ENCODE measurements at regions of chr12 and their contacts with region 1.

Region 1: GRCh38 chr12:65673732-65674131 is 150.6 kb upstream of the HMGA2 start:
- DNase-seq: no peak
- ATAC-seq: no peak

Region 2: DNA sequence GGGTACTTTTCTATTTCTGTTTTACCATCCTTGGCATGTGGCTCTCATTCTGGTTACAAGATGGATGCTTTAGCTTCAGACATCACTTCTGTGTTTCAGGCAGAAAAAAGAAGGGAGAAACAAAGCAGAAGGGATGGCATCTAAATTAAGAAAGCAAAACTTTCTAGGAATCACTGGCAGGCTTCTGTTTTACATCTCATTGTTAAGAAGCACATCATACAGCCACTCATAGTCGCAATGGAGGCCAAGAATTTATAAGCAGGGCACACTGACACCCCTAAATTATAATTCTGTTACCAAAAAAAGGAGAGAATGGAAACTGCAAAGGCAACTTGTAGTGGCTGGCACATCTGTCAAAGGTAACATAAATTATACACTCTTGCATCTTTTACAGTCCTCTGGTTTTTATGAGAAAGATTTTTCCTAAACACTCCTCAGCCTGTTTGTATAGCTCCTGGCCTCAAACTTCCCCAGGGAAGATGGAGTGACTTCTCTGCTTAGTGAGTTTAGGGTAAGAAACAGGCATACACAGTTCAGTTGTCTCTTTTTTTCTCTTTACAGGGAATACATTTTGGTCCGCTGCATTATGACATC is 526.3 kb before region 1 on chr12:
- intact Hi-C with region 1: no loop called
- DNase-seq: no peak
- ATAC-seq: no peak

Region 3: GRCh38 chr12:65565601-65566560 is 107.9 kb before region 1 on chr12:
- intact Hi-C with region 1: loop called (anchors 10 kb)
- DNase-seq: no peak
- ATAC-seq: peak; percentile 56